ENCODE measurements at regions of chr1 and their contacts with region 1.

Region 1: GRCh38 chr1:45303582-45304310 is 22.9 kb upstream of the HPDL start:
- DNase-seq: peak; percentile 97
- H3K4me3 Mint-ChIP-seq: peak overlapping the region; percentile 86
- H3K27ac Mint-ChIP-seq: peak overlapping the region; percentile 96
- H3K4me1 Mint-ChIP-seq: peaks cover 5% of the 10 kb centered on the region
- H3K27me3 Mint-ChIP-seq: no peaks in the 10 kb centered on the region
- CTCF ChIP-seq: peak; percentile 67

Region 2: DNA sequence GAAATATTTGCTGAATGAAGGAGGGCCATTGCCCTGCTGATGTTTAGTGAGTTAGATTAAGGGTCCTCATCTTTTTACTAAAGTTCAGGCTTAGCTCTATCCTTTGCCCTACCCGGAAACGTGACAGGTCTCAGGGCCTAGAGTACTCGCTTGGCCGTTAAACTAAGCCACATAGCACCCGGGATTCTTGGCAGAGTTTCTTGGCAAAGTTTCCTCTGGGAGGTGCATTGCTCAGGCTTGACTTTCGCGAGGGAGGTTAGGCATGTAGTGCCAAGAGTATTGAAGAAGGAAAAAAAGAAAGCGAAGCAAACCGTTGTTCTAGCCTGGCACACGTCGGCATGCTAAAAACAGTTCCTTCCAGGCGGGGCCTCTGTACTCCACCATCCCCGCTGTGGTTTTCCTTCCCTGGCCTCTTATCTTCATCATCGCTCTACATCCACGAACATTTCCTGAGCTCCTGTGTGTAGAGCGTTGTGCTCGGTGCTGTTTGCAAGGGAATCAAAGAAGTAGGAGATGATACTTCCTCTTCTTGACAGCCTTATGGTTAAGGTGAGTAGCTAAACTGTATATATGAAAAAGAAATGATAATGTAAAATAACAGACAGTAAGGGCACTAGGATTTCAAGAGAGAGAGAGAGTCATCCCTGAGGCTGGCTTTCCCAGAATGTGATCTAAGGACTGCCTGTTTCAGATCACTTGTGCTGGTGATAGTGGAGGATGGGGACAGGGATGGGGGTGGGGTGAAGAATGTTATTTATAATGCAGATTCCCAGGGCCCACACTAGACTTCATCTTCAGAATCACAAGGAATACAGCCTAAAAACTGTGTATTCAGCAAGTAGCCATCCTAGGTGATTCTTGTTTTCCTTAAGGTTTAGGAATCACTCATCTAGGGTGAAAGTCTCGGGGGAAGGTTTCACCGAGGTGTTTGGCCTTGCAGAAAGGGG is 879.9 kb before region 1 on chr1:
- CTCF ChIA-PET with region 1: no interaction called
- POLR2A ChIA-PET with region 1: no interaction called
- intact Hi-C with region 1: no loop called
- DNase-seq: peak; percentile 98
- H3K4me3 Mint-ChIP-seq: peak overlapping the region; percentile 73
- H3K27ac Mint-ChIP-seq: peak overlapping the region; percentile 89
- H3K4me1 Mint-ChIP-seq: peaks cover 36% of the 10 kb centered on the region
- H3K27me3 Mint-ChIP-seq: no peaks in the 10 kb centered on the region
- CTCF ChIP-seq: no peak

Region 3: DNA sequence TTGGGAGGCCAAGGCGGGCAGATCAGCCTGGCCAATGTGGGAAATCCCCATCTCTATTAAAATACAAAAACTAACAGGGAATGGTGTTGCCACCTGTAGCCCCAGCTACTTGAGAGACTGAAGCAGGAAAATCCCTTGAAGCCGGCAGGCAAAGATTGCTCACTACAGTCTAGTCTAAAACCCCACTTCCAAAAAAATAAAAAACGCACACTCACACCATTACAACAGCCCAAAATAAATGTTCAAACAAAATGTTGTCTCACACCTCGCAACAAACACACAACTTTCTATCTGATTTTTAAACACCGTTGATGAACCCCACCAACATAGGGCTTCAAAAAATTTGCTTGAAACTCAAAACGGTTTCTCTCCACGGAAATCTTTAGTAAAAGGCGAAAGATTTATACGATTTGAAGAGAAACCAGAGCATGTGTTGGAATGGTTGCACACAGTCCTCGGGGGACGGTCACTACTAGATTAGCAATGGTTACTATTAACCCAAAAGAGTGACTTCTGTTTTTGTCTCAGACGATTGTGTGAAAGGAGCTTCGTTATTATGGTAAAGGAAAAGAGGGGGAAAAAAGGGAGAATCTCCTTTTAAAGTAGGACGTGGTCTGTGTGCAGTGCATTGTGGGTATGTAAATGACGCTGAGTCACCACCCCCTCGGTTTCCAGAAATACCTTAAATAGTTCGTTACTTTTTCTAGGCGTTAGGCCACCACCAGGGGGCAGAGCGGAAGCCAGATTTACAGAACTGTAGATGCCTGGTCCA is 572.8 kb before region 1 on chr1 and contains the start of gene RNU5D-1:
- CTCF ChIA-PET with region 1: interaction called, 7 read pairs
- POLR2A ChIA-PET with region 1: interaction called, 8 read pairs
- intact Hi-C with region 1: loop called (anchors 5 kb)
- DNase-seq: peak; percentile 97
- H3K4me3 Mint-ChIP-seq: peak within 1 kb of the TSS; percentile 51
- H3K27ac Mint-ChIP-seq: peak within 1 kb of the TSS; percentile 100
- H3K4me1 Mint-ChIP-seq: peaks cover 26% of the 10 kb centered on the region
- H3K27me3 Mint-ChIP-seq: no peaks in the 10 kb centered on the region
- CTCF ChIP-seq: peak; percentile 77
- total RNA-seq, gene RNU5D-1: not detected in 2 replicates

Region 4: GRCh38 chr1:44835738-44836675 is 467.7 kb before region 1 on chr1:
- CTCF ChIA-PET with region 1: interaction called, 5 read pairs
- POLR2A ChIA-PET with region 1: no interaction called
- intact Hi-C with region 1: loop called (anchors 1 kb)
- DNase-seq: peak; percentile 78
- H3K4me3 Mint-ChIP-seq: no peak overlapping the region
- H3K27ac Mint-ChIP-seq: peak overlapping the region; percentile 13
- H3K4me1 Mint-ChIP-seq: no peaks in the 10 kb centered on the region
- H3K27me3 Mint-ChIP-seq: no peaks in the 10 kb centered on the region
- CTCF ChIP-seq: peak; percentile 81

Region 5: GRCh38 chr1:45033356-45033755 is 270.4 kb before region 1 on chr1:
- CTCF ChIA-PET with region 1: interaction called, 12 read pairs
- POLR2A ChIA-PET with region 1: no interaction called
- intact Hi-C with region 1: no loop called
- DNase-seq: no peak
- H3K4me3 Mint-ChIP-seq: no peak overlapping the region
- H3K27ac Mint-ChIP-seq: no peak overlapping the region
- H3K4me1 Mint-ChIP-seq: no peaks in the 10 kb centered on the region
- H3K27me3 Mint-ChIP-seq: no peaks in the 10 kb centered on the region
- CTCF ChIP-seq: no peak

Region 6: GRCh38 chr1:45103534-45103933 is 200.2 kb before region 1 on chr1:
- CTCF ChIA-PET with region 1: no interaction called
- POLR2A ChIA-PET with region 1: no interaction called
- intact Hi-C with region 1: no loop called
- DNase-seq: no peak
- H3K4me3 Mint-ChIP-seq: no peak overlapping the region
- H3K27ac Mint-ChIP-seq: no peak overlapping the region
- H3K4me1 Mint-ChIP-seq: no peaks in the 10 kb centered on the region
- H3K27me3 Mint-ChIP-seq: peaks cover 25% of the 10 kb centered on the region
- CTCF ChIP-seq: no peak

Region 7: GRCh38 chr1:45291716-45292115 is 12.0 kb before region 1 on chr1:
- CTCF ChIA-PET with region 1: interaction called, 17 read pairs
- POLR2A ChIA-PET with region 1: interaction called, 6 read pairs
- intact Hi-C with region 1: no loop called
- DNase-seq: no peak
- H3K4me3 Mint-ChIP-seq: no peak overlapping the region
- H3K27ac Mint-ChIP-seq: no peak overlapping the region
- H3K4me1 Mint-ChIP-seq: no peaks in the 10 kb centered on the region
- H3K27me3 Mint-ChIP-seq: peaks cover 11% of the 10 kb centered on the region
- CTCF ChIP-seq: no peak

Region 8: GRCh38 chr1:45348716-45349677 is 45.3 kb after region 1 on chr1:
- CTCF ChIA-PET with region 1: interaction called, 7 read pairs
- POLR2A ChIA-PET with region 1: interaction called, 11 read pairs
- intact Hi-C with region 1: no loop called
- DNase-seq: peak; percentile 83
- H3K4me3 Mint-ChIP-seq: peak overlapping the region; percentile 28
- H3K27ac Mint-ChIP-seq: peak overlapping the region; percentile 52
- H3K4me1 Mint-ChIP-seq: peaks cover 21% of the 10 kb centered on the region
- H3K27me3 Mint-ChIP-seq: no peaks in the 10 kb centered on the region
- CTCF ChIP-seq: no peak

Region 9: DNA sequence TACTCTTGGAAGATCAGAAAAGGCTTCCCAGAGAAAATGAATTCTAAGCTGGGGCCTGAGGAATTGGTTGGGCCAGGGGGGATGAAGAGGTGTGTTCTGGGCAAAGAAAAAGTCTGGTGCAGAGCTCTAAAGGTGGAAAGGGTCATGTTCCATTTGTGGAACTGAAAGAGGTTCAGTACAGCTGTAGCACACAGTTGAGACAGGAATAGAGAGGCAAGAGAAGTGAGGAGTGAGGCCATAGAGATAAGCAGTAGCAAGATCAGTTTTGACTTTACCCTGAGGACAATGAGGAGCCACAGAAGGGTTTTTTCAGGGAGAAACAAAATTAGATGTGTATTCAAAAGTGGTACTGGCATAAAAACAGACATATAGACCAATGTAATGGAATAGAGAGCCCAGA is 66.8 kb after region 1 on chr1:
- CTCF ChIA-PET with region 1: no interaction called
- POLR2A ChIA-PET with region 1: no interaction called
- intact Hi-C with region 1: no loop called
- DNase-seq: no peak
- H3K4me3 Mint-ChIP-seq: no peak overlapping the region
- H3K27ac Mint-ChIP-seq: no peak overlapping the region
- H3K4me1 Mint-ChIP-seq: no peaks in the 10 kb centered on the region
- H3K27me3 Mint-ChIP-seq: no peaks in the 10 kb centered on the region
- CTCF ChIP-seq: no peak